Common myeloid progenitor, CD34-positive (primary cell): ENCODE measurements at regions of chr1 and their contacts with region 1.

Region 1: DNA sequence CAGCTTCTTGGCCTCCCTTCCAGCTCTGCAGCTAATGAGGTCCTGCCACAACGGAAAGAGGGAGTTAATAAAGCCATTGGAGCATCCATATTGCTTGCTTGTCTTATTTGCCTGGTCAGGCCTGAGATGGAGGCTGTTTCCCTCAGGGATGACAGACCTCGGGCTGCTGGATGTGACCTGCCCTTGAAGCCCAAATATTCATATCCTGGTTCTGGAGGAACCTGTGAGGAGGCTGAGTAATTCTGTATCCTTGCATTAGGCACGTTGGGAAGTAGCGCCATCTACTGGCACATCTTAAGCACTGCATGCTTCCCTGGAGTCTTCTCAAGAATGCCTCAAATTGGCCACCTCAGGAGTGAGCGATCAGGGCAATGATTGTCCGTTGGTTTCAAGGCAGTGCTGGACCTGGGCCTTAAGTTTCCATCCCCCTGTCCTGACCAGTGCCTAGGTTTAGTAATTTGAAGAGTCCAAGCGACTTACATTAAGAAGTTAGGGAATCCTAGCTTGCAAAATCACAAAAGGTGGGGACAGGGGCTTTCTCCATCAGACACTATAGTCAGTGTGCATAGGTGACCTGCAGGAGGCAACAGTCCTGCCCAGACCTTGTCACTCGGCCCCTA is 13.8 kb upstream of the NASP start:
- DNase-seq: peak; percentile 82 to 89 (median 85)
- H3K4me3 ChIP-seq: no peak overlapping the region
- H3K27ac ChIP-seq: no peak overlapping the region
- H3K4me1 ChIP-seq: peaks cover 0 to 19% (median 6%) of the 10 kb centered on the region in 4 experiments
- H3K27me3 ChIP-seq: no peaks in the 10 kb centered on the region

Region 2: DNA sequence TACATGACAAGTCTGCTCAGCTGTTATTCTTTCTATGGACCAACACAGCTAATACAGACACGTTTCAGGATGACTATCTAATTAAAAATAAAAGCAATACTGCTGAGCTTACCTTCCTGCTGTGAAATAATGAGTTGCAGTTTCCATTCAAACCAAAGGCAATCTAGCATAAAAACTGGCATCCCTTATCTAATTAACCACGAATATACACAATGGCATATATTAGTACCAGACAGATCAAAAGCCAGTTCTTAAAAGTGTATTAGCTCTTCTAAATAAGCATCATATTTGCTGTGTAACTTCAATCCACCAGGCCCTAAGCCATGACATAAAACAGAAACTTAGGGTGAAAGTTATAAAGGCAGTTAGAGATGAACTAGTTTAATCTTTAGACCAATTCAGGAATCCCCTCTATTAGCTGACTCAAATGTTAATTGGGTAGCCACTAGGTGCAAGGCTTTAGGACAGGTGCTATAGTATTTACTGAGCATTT is 99.7 kb before region 1 on chr1:
- CTCF ChIA-PET with region 1: no interaction called
- POLR2A ChIA-PET with region 1: no interaction called
- DNase-seq: no peak
- H3K4me3 ChIP-seq: no peak overlapping the region
- H3K27ac ChIP-seq: no peak overlapping the region
- H3K4me1 ChIP-seq: peaks cover 0 to 2% (median under 1%) of the 10 kb centered on the region in 4 experiments
- H3K27me3 ChIP-seq: no peaks in the 10 kb centered on the region

Region 3: DNA sequence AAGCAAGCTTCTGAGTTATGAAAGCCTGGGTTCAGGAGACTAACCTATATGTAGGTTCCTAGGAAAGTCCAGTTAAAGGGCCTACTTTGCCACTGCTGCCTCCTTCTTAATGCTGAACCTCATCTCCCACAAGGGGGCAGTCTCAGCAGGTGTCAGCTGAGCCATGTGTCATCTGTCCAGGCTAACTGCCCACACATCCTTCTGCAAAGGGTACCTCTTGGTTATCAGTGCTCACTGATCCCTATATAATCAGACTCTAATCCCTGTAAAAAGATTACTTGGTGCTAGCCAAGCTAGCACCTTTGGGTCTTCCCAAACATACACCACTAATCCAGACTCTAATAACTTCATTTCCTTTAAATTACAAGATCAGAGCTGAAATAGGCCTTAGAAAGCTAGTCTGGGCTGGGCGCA is 57.4 kb before region 1 on chr1:
- CTCF ChIA-PET with region 1: interaction called, 225 read pairs
- POLR2A ChIA-PET with region 1: interaction called, 10 read pairs
- DNase-seq: peak; percentile 61 to 80 (median 71)
- H3K4me3 ChIP-seq: no peak overlapping the region
- H3K27ac ChIP-seq: no peak overlapping the region
- H3K4me1 ChIP-seq: peaks cover 0 to 8% (median 0%) of the 10 kb centered on the region in 4 experiments
- H3K27me3 ChIP-seq: no peaks in the 10 kb centered on the region

Region 4: GRCh38 chr1:45543581-45544417 is 26.3 kb before region 1 on chr1:
- CTCF ChIA-PET with region 1: interaction called, 30 read pairs
- POLR2A ChIA-PET with region 1: interaction called, 3 read pairs
- DNase-seq: peak; percentile 91 to 98 (median 97)
- H3K4me3 ChIP-seq: peak overlapping the region in 6 of 7 experiments; percentile 17 to 64 (median 36)
- H3K27ac ChIP-seq: peak overlapping the region in 1 of 2 experiments; percentile 57
- H3K4me1 ChIP-seq: peaks cover 30 to 54% (median 44%) of the 10 kb centered on the region in 4 experiments
- H3K27me3 ChIP-seq: no peaks in the 10 kb centered on the region

Region 5: GRCh38 chr1:45557422-45557944 is 12.6 kb before region 1 on chr1:
- CTCF ChIA-PET with region 1: interaction called, 59 read pairs
- POLR2A ChIA-PET with region 1: interaction called, 3 read pairs
- DNase-seq: no peak
- H3K4me3 ChIP-seq: no peak overlapping the region
- H3K27ac ChIP-seq: peak overlapping the region in 1 of 2 experiments; percentile 33
- H3K4me1 ChIP-seq: peaks cover 2 to 14% (median 7%) of the 10 kb centered on the region in 4 experiments
- H3K27me3 ChIP-seq: no peaks in the 10 kb centered on the region